SK-N-SH (cell line): ENCODE measurements at regions of chr12 and their contacts with region 1.

Region 1: GRCh38 chr12:92145731-92146496 is at the start of gene BTG1:
- DNase-seq: peak; percentile 94
- H3K4me3 ChIP-seq: peak within 1 kb of the TSS; percentile 89 to 98
- H3K27ac ChIP-seq: peak within 1 kb of the TSS; percentile 91 to 97
- H3K4me1 ChIP-seq: peaks cover 6 to 10% of the 10 kb centered on the region in 2 experiments; a peak in 3 of 4 replicates
- H3K27me3 ChIP-seq: no peaks in the 10 kb centered on the region
- CTCF ChIP-seq: no peak
- EP300 ChIP-seq: no peak
- RAD21 ChIP-seq: 0 out of 2 replicates have a peak, but pooled peaks have one; percentile 24
- polyA plus RNA-seq, gene BTG1: 16.2 and 28.3 TPM in 2 replicates

Region 2: GRCh38 chr12:91413581-91414546 is 732.0 kb before region 1 on chr12:
- CTCF ChIA-PET with region 1: interaction called, 4 read pairs
- POLR2A ChIA-PET with region 1: interaction called, 10 read pairs
- DNase-seq: peak; percentile 57
- H3K4me3 ChIP-seq: no peak overlapping the region
- H3K27ac ChIP-seq: peak overlapping the region in 1 of 2 experiments; percentile 96; a peak in 2 of 4 replicates
- H3K4me1 ChIP-seq: peaks cover 0 to 9% of the 10 kb centered on the region in 2 experiments; a peak in 1 of 4 replicates
- H3K27me3 ChIP-seq: no peaks in the 10 kb centered on the region
- CTCF ChIP-seq: no peak
- EP300 ChIP-seq: peak; percentile 13 to 98; a peak in 2 of 4 replicates
- RAD21 ChIP-seq: peak; percentile 38

Region 3: DNA sequence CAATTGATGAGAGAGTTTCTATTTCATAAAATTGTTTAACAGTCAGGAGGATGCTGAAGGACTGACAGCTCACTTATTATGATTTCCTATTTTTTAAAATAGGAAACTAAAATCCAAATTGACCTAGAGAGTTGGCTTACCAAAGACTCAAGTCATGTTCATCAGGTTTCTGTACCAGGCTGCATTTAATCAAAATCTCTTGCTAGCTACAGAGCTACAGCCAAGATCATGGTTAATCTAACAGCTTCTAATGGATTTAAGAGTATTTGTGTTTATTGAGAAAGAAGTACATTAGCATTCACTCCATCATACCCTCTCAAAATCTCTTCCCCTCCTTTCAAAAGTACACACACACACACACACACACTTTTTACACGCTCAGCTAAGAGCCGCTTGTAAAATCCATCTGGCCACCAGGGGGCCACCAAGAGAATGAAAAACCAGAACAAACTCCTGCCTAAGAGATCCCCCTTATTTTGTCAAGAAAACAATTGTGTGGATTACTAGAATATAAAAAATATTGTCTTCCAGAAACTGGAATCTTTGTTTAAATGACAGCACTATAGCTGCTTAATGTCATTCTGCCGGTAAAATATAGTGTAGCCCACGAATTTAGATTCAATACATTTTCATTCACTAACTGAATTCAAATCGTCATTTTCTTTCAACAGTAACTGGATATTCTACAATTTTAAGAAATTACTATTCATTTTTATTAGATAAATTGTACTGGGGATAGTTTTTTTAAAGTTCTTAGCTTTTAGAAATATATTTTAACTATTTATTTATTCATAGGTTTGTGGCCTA is 334.2 kb before region 1 on chr12:
- CTCF ChIA-PET with region 1: interaction called, 28 read pairs
- POLR2A ChIA-PET with region 1: interaction called, 26 read pairs
- DNase-seq: peak; percentile 22
- H3K4me3 ChIP-seq: peak overlapping the region in 1 of 2 experiments; percentile 24; a peak in 1 of 4 replicates
- H3K27ac ChIP-seq: no peak overlapping the region
- H3K4me1 ChIP-seq: no peaks in the 10 kb centered on the region; a peak in 1 of 4 replicates
- H3K27me3 ChIP-seq: no peaks in the 10 kb centered on the region
- CTCF ChIP-seq: peak; percentile 96
- EP300 ChIP-seq: no peak
- RAD21 ChIP-seq: peak; percentile 72

Region 4: GRCh38 chr12:92244036-92244435 is 98.1 kb after region 1 on chr12:
- CTCF ChIA-PET with region 1: no interaction called
- POLR2A ChIA-PET with region 1: interaction called, 11 read pairs
- DNase-seq: no peak
- H3K4me3 ChIP-seq: no peak overlapping the region
- H3K27ac ChIP-seq: no peak overlapping the region; a peak in 1 of 4 replicates
- H3K4me1 ChIP-seq: no peaks in the 10 kb centered on the region; a peak in 2 of 4 replicates
- H3K27me3 ChIP-seq: no peaks in the 10 kb centered on the region
- CTCF ChIP-seq: no peak
- EP300 ChIP-seq: no peak
- RAD21 ChIP-seq: 0 out of 2 replicates have a peak, but pooled peaks have one; percentile 11

Region 5: GRCh38 chr12:92570056-92570753 is 424.3 kb after region 1 on chr12:
- CTCF ChIA-PET with region 1: interaction called, 11 read pairs
- POLR2A ChIA-PET with region 1: interaction called, 17 read pairs
- DNase-seq: peak; percentile 49
- H3K4me3 ChIP-seq: no peak overlapping the region; a peak in 1 of 4 replicates
- H3K27ac ChIP-seq: peak overlapping the region in 1 of 2 experiments; percentile 60; a peak in 2 of 4 replicates
- H3K4me1 ChIP-seq: no peaks in the 10 kb centered on the region; a peak in 2 of 4 replicates
- H3K27me3 ChIP-seq: no peaks in the 10 kb centered on the region
- CTCF ChIP-seq: peak; percentile 86
- EP300 ChIP-seq: no peak
- RAD21 ChIP-seq: peak; percentile 94